ENCODE measurements at regions of chr3 and their contacts with region 1.

Region 1: DNA sequence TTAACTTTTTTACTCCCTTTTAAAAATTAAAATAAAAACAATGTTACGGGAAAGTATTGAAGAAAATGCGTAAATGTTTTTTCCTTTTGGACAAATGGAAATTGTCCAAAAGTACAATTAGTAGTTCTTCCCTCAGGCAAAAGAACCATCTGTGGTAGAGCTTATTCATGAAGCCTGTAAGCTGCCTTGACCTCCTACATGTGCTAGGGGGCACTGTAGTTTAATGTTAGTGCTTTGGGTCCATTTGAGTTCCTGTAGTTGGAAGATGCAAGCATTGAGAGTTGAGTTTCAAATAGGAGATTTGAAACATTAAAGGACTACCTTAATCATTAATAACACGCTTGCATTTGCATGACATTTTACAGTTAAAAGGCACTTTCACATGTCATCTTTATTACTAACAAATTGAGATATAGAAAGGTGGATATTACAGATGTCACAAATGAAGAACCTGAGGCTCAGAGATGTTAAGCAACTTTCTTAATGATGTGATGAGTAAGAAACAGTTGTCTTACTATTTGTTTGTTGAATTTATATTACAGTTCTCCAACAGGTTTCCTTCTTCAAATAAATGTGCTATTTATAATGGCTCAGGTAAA is 1.8 kb upstream of the ZNF385D start:
- DNase-seq: no peak
- H3K4me3 ChIP-seq: no peak overlapping the region
- H3K27ac ChIP-seq: no peak overlapping the region
- H3K4me1 ChIP-seq: no peaks in the 10 kb centered on the region
- H3K27me3 ChIP-seq: no peaks in the 10 kb centered on the region
- CTCF ChIP-seq: no peak
- EP300 ChIP-seq: no peak
- POLR2A ChIP-seq: no peak

Region 2: GRCh38 chr3:21672303-21672702 is 80.5 kb before region 1 on chr3:
- in situ Hi-C with region 1: no loop called
- intact Hi-C with region 1: no loop called
- DNase-seq: no peak
- H3K4me3 ChIP-seq: no peak overlapping the region
- H3K27ac ChIP-seq: no peak overlapping the region
- H3K4me1 ChIP-seq: no peaks in the 10 kb centered on the region
- H3K27me3 ChIP-seq: no peaks in the 10 kb centered on the region
- CTCF ChIP-seq: no peak
- EP300 ChIP-seq: no peak
- POLR2A ChIP-seq: no peak

Region 3: GRCh38 chr3:21722301-21722700 is 30.5 kb before region 1 on chr3:
- in situ Hi-C with region 1: no loop called
- intact Hi-C with region 1: loop called (anchors 2 kb)
- DNase-seq: no peak
- H3K4me3 ChIP-seq: no peak overlapping the region
- H3K27ac ChIP-seq: no peak overlapping the region
- H3K4me1 ChIP-seq: no peaks in the 10 kb centered on the region
- H3K27me3 ChIP-seq: no peaks in the 10 kb centered on the region
- CTCF ChIP-seq: no peak
- EP300 ChIP-seq: no peak
- POLR2A ChIP-seq: no peak

Region 4: DNA sequence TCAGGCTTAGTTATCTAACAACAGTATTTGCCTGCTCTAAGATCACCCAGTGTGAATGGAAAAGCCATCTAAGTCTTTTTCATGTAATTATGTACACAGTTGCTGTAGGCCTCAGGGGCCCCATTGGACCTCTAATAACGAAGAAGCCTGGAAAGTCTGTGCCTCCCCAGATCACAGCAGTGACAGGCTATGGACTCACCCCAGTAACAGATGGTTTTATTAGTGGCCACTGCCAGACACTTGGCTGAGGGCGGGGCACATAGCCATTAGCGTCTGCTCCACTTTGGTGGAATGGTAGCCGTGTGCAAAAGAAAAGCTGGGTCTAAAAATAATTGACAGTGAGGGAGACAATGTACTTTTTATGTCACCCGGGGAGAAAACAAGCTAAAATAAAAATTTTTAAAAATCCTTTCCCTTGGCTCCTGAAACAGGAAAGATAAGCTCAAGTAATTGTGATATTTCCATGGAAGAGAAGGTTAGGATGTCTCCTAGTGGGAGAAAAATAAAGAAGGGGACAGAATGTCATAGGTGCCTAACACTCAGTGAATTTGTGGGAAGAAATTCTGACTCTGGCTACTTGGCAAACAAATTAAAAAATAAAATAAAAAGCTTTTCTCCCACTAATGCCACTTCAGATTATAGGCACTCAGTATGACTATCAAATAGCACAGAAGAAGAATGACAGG is 42.4 kb after region 1 on chr3:
- in situ Hi-C with region 1: no loop called
- intact Hi-C with region 1: no loop called
- DNase-seq: no peak
- H3K4me3 ChIP-seq: no peak overlapping the region
- H3K27ac ChIP-seq: no peak overlapping the region
- H3K4me1 ChIP-seq: no peaks in the 10 kb centered on the region
- H3K27me3 ChIP-seq: no peaks in the 10 kb centered on the region
- CTCF ChIP-seq: no peak
- EP300 ChIP-seq: no peak
- POLR2A ChIP-seq: no peak

Region 5: DNA sequence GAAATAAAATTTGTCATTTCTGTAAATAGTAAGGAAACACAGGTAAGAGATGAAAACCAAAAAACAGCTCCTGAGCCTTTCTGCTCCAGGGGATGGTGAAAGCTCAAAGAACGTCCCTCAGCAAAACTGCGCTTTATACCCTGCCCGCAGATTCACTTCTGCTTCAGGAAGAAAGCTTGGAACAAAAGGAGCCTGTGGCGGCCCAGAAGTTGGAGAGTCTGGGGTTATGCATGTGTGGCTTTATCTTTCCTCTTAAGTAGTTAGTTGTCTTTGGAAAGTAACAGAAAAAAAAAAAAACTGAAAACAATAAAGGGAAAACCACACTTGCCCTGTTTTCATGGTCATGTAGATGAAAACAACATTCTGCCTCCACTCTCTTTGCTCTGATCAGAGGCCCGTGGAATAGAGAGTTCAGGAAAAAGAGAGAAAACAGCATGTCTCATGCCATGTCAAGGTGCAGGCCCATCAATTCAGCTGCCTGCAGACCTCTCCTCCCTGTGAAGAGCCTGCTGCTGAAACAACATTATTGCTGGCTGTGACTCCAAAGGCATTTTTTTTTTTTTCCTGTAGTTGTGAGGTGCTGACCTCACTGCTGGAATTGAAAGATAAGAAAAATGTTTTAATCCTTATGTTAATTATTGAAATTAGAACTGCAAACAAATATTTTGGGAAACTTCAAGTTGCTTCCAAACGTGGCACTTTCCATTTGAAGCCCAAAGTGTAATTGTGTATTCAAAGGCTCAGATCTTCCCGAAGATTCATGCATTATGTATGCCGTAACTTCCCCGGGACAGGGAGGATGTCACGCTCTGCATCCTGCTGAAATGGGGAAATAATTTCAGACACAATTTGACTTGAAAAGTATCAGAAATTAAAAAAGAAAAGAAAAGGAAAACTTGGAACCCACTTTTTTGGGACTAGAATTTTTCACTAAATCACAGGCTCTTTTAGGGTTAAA is 106.6 kb after region 1 on chr3:
- in situ Hi-C with region 1: loop called in 1 of 4 experiments (anchors 25 kb)
- intact Hi-C with region 1: no loop called
- DNase-seq: no peak
- H3K4me3 ChIP-seq: no peak overlapping the region
- H3K27ac ChIP-seq: no peak overlapping the region
- H3K4me1 ChIP-seq: no peaks in the 10 kb centered on the region
- H3K27me3 ChIP-seq: no peaks in the 10 kb centered on the region
- CTCF ChIP-seq: no peak
- EP300 ChIP-seq: no peak
- POLR2A ChIP-seq: no peak

Region 6: GRCh38 chr3:22063500-22063899 is 310.7 kb after region 1 on chr3:
- in situ Hi-C with region 1: no loop called
- intact Hi-C with region 1: no loop called
- DNase-seq: no peak
- H3K4me3 ChIP-seq: no peak overlapping the region
- H3K27ac ChIP-seq: no peak overlapping the region
- H3K4me1 ChIP-seq: no peaks in the 10 kb centered on the region
- H3K27me3 ChIP-seq: no peaks in the 10 kb centered on the region
- CTCF ChIP-seq: no peak
- EP300 ChIP-seq: no peak
- POLR2A ChIP-seq: no peak

Region 7: GRCh38 chr3:22170370-22170769 is 417.5 kb after region 1 on chr3:
- in situ Hi-C with region 1: no loop called
- intact Hi-C with region 1: no loop called
- DNase-seq: no peak
- H3K4me3 ChIP-seq: no peak overlapping the region
- H3K27ac ChIP-seq: no peak overlapping the region
- H3K4me1 ChIP-seq: no peaks in the 10 kb centered on the region
- H3K27me3 ChIP-seq: no peaks in the 10 kb centered on the region
- CTCF ChIP-seq: no peak
- EP300 ChIP-seq: no peak
- POLR2A ChIP-seq: no peak

Measured in transverse colon (tissue), 4 donors.